Activated CD8-positive, alpha-beta memory T cell treated with anti-CD3 and anti-CD28 coated beads, Interleukin-2, amount 10 ng/mL, durations not matched to agents 7 days and 5 days (primary cell): ENCODE measurements at regions of chr6 and their contacts with region 1.

Region 1: DNA sequence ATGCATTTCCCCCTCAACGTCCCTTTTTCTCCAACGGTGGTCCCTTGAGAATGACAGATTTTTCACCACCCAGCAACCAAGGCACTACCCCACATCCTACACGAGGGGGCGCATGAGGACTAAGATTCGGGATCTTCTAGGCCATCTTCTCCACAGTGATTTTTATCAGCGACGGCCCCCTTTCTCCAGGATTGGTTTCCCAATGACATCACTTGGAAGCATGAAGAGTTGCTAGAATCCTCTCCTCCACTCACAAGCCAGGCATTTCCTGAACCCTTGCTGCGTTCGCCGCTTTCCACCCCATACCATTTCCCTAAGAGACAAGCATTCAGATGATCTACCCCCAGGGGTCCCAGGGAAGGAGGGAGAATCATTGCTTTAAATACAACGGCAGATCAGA is 252.0 kb downstream of the HIVEP2 start:
- DNase-seq: peak; percentile 68
- ATAC-seq: peak; percentile 81
- H3K4me3 Mint-ChIP-seq: no peak overlapping the region
- H3K27ac Mint-ChIP-seq: no peak overlapping the region
- H3K4me1 Mint-ChIP-seq: peaks cover 11% of the 10 kb centered on the region
- H3K27me3 Mint-ChIP-seq: peaks cover 3% of the 10 kb centered on the region

Region 2: DNA sequence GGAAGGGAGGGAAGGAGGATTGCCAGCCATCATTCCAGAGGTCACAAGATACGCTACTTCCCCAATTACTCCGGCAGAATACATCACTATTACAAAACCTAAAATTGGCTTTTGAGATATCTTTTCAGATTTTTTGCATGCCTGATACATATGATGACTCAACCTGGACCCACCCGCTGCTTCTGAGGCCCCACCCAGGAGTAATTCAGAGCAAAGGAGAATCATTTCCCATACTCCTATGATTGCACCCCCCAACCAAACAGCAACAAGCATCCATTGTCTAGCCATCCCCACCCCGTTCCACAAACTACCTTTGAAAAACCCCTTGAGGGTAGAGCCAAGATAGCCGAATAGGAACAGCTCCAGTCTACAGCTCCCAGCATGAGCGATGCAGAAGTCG is 723.7 kb before region 1 on chr6:
- CTCF ChIA-PET with region 1: no interaction called
- DNase-seq: no peak
- ATAC-seq: no peak
- H3K4me3 Mint-ChIP-seq: no peak overlapping the region
- H3K27ac Mint-ChIP-seq: no peak overlapping the region
- H3K4me1 Mint-ChIP-seq: no peaks in the 10 kb centered on the region
- H3K27me3 Mint-ChIP-seq: no peaks in the 10 kb centered on the region

Region 3: DNA sequence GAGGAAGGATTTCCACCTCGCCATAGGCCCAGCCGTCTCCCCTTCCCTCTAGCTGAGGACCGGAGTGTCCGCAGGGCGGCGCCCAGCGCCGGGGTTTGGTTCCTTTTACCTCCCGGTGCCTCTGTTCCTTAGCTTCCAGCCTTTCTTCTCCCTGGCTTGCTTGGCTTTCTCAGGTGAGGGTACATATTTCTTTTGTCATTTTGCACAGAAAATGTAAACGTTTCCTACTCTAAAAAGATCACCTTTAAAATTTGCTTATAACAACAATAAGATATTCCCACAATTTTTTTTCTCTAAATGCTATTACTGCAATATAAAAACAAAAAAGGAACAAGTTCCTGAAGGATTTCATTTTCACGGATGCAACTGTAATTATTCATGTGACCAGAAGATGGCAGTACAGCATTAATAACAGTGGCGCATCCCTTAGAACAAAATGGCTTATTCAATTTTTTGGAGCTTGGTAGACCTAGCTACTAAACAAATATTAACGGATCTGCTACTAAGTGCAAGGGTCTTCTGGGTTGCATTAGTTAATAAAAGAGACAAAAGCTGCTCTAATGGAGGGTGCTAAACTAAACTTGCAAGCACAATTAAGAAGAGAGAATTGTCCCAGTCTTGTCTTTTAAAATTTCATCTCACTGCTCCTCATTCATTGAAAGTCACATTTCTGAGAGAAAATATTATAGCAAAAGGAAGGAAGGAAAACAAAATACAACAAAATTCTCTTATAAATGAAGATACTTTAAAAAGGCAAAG is 218.2 kb before region 1 on chr6:
- CTCF ChIA-PET with region 1: interaction called, 10 read pairs
- DNase-seq: no peak
- ATAC-seq: no peak
- H3K4me3 Mint-ChIP-seq: no peak overlapping the region
- H3K27ac Mint-ChIP-seq: no peak overlapping the region
- H3K4me1 Mint-ChIP-seq: peaks cover 4% of the 10 kb centered on the region
- H3K27me3 Mint-ChIP-seq: peaks cover 12% of the 10 kb centered on the region

Region 4: GRCh38 chr6:142566628-142567396 is 126.1 kb before region 1 on chr6:
- CTCF ChIA-PET with region 1: no interaction called
- DNase-seq: peak; percentile 60
- ATAC-seq: peak; percentile 63
- H3K4me3 Mint-ChIP-seq: no peak overlapping the region
- H3K27ac Mint-ChIP-seq: no peak overlapping the region
- H3K4me1 Mint-ChIP-seq: peaks cover 26% of the 10 kb centered on the region
- H3K27me3 Mint-ChIP-seq: no peaks in the 10 kb centered on the region

Region 5: DNA sequence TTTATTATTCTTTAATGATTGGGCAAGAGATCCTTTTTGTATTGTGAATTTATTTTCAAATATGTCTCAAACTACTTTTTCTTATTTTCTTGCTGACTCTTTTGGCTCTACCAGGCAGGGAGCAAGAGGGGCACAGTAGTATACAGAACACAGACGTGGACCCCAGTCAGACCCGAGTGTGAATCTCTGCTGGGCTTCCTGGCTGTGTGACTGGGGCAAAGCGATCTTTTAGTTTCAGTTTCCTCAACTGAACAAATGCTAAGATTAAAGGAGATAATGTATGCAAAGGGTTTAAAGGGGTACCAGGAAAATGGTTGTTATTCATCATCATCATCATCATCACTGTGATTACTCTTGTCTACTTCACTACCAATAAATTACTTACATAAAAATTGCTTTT is 65.5 kb before region 1 on chr6:
- CTCF ChIA-PET with region 1: no interaction called
- DNase-seq: no peak
- ATAC-seq: peak; percentile 39
- H3K4me3 Mint-ChIP-seq: peak overlapping the region; percentile 54
- H3K27ac Mint-ChIP-seq: peak overlapping the region; percentile 24
- H3K4me1 Mint-ChIP-seq: peaks cover 2% of the 10 kb centered on the region
- H3K27me3 Mint-ChIP-seq: peaks cover 3% of the 10 kb centered on the region

Region 6: GRCh38 chr6:143026696-143027449 is 333.9 kb after region 1 on chr6:
- CTCF ChIA-PET with region 1: interaction called, 26 read pairs
- DNase-seq: peak; percentile 53
- ATAC-seq: peak; percentile 60
- H3K4me3 Mint-ChIP-seq: no peak overlapping the region
- H3K27ac Mint-ChIP-seq: no peak overlapping the region
- H3K4me1 Mint-ChIP-seq: no peaks in the 10 kb centered on the region
- H3K27me3 Mint-ChIP-seq: peaks cover 1% of the 10 kb centered on the region